ENCODE measurements at regions of chr12 and their contacts with region 1.

Region 1: GRCh38 chr12:114508529-114509129 is 102.7 kb upstream of the TBX5 start:
- DNase-seq: peak; percentile 62
- CTCF ChIP-seq: peak; percentile 72

Region 2: DNA sequence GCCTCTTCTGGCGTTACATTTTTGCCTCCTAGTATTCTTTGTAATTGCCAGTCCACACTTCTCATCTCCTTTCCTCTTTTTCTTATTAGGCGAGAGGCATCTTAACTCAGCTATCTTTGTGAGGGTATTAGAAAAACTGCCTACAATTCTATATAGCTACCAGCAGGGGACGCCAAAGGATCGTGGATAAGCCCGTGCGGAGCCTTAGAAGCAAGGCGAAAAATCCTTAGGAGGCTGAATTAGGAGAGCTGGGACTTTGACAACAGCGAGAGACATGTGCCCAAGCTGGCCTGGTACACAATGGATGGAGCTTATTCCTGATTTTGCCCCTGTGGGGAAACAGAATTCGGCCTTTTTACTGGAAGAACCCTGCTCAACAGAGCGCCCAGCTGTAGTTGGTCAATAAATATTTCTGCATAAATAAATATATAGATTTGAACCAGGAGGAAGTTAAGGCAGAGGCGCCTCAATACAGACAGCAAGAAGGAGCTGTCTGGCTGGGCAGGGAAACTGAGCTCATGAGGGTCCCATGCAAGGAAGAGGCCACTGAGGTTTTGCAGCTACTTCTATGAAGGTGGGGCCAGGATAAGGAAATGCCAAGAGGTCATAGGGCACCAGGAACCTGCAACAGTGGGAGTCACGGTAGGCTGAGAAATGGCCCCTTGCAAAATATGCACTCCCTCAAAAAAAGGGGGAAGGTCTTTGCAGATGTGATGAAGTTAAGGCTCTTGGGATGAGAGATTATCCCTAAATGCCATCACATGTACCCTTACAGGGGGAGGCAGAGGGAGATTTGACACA is 527.9 kb before region 1 on chr12:
- in situ Hi-C with region 1: loop called (anchors 25 kb)
- DNase-seq: peak; percentile 45
- CTCF ChIP-seq: peak; percentile 88

Region 3: DNA sequence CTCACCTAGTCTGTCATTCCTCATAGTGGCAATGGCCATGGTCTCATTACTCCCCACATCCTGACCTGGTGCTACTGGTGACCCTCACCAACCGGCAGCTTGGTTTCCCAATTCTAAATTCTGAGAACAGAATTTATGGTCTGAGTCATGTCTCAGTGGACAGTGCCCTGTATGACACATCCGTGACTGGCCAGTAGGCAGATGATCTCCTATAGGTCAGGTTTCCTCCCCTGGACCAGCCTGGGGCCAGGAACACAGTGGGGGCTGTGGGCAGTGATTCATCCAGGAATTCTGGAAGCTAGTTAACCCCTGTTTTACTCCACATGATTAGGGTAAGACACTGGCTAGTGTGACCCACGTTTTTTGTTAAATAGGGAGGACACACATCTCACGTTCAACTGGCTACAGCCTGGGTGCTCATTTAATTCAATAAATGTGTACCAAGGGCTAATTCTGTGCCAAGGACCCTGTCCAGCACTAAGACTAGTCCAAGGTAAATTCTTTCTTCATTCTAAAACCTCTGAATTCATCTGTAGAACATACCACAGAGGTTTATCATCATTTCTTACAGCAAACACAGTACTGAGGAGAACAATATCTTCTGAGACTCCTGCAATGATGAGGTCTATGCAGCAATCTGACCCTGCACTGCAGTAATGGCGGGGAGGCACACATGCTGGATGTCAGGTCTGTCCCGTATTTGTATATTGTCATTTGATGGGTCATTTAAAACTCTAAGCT is 425.0 kb after region 1 on chr12:
- in situ Hi-C with region 1: no loop called
- DNase-seq: no peak
- CTCF ChIP-seq: no peak